ENCODE measurements at regions of chr11 and their contacts with region 1.

Region 1: DNA sequence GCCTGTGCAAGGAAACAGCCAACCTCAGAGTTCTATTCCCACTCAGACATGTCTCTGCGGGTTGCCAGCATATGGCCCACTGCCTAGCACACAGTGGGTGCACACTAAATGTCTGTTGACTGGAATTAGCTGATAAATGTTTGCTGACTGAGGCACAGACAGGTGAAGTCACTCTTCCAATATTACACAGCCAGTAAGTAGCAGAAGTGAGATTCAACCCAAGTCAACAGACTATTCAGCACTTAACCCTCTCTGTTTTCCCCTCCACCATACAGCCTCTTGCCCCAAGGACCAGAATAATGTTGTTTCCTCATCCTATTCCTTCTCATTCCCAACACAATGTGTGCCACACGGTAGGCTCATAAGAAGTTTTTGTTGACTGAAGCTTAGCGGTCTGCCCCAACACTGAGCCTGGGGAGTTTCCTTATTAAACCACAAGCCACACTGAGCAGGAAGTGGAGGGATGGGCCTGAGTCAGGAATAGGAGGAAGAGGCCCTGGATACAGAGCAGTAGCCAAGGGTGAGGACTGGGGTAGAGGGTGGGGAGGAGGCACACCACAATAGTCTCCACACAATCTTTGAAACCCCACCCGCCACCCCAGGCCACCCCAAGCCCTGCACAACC is 15.7 kb upstream of the IL10RA start:
- DNase-seq: no peak
- ATAC-seq: peak; percentile 36
- H3K4me3 ChIP-seq: no peak overlapping the region
- H3K4me3 Mint-ChIP-seq: peak overlapping the region; percentile 36
- H3K27ac ChIP-seq: no peak overlapping the region
- H3K27ac Mint-ChIP-seq: no peak overlapping the region
- H3K4me1 ChIP-seq: peaks cover 14 to 25% of the 10 kb centered on the region in 2 donors
- H3K4me1 Mint-ChIP-seq: peaks cover 36% of the 10 kb centered on the region
- H3K27me3 ChIP-seq: no peaks in the 10 kb centered on the region
- H3K27me3 Mint-ChIP-seq: no peaks in the 10 kb centered on the region
- CTCF ChIP-seq: no peak

Region 2: GRCh38 chr11:117907251-117907981 is 63.1 kb before region 1 on chr11:
- CTCF ChIA-PET with region 1: no interaction called
- POLR2A ChIA-PET with region 1: interaction called, 10 read pairs
- intact Hi-C with region 1: no loop called
- DNase-seq: peak; percentile 47
- ATAC-seq: peak; percentile 93
- H3K4me3 ChIP-seq: no peak overlapping the region
- H3K4me3 Mint-ChIP-seq: no peak overlapping the region
- H3K27ac ChIP-seq: no peak overlapping the region
- H3K27ac Mint-ChIP-seq: no peak overlapping the region
- H3K4me1 ChIP-seq: no peaks in the 10 kb centered on the region
- H3K4me1 Mint-ChIP-seq: peaks cover 5% of the 10 kb centered on the region
- H3K27me3 ChIP-seq: peaks cover 0 to 5% (median 0%) of the 10 kb centered on the region in 4 experiments
- H3K27me3 Mint-ChIP-seq: peaks cover 12% of the 10 kb centered on the region
- CTCF ChIP-seq: no peak

Region 3: GRCh38 chr11:117934526-117935307 is 35.8 kb before region 1 on chr11:
- CTCF ChIA-PET with region 1: no interaction called
- POLR2A ChIA-PET with region 1: no interaction called
- intact Hi-C with region 1: no loop called
- DNase-seq: no peak
- ATAC-seq: no peak
- H3K4me3 ChIP-seq: no peak overlapping the region
- H3K4me3 Mint-ChIP-seq: no peak overlapping the region
- H3K27ac ChIP-seq: no peak overlapping the region
- H3K27ac Mint-ChIP-seq: no peak overlapping the region
- H3K4me1 ChIP-seq: peaks cover 11 to 20% of the 10 kb centered on the region in 2 donors
- H3K4me1 Mint-ChIP-seq: peaks cover 16% of the 10 kb centered on the region
- H3K27me3 ChIP-seq: no peaks in the 10 kb centered on the region
- H3K27me3 Mint-ChIP-seq: no peaks in the 10 kb centered on the region
- CTCF ChIP-seq: no peak

Region 4: DNA sequence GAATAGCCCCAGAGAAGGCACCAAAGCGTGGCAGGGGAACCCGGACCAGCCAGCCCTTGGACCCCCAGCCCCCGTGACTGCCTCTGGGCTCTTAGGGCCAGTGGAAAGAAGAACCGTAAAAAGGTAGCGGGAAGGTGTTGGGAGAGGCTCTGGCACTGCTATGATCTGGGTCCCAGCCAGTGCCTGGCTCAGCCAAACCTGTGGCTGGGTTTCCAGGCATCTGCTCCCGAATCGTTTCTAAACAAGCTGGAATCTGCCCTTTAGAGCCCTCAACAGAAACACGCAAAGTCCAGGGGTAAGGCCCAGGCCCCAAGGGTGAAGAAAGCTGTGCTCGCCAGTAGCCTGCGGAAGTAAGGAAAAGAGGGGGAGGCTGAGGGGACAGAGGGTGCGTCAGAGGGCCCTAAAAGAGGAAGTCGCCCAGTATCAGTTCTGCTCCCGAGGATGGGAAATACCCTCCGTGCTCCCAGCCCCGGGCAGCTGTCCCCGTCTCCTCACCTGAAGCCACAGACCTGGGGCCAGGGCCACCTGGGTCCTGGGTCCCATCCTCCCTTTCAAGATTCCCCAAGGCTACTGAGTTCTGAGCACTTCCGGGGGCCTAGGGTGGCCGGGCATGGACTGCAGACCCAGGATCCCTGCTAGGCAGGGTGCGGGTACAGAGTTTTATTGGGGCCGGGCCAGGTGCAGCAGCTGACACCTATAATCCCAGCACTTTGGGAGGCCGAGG is 40.4 kb after region 1 on chr11:
- CTCF ChIA-PET with region 1: no interaction called
- POLR2A ChIA-PET with region 1: interaction called, 7 read pairs
- intact Hi-C with region 1: loop called (anchors 5 kb)
- DNase-seq: peak; percentile 96
- ATAC-seq: peak; percentile 73
- H3K4me3 ChIP-seq: peak overlapping the region in 2 of 5 experiments; percentile 2 to 38
- H3K4me3 Mint-ChIP-seq: peak overlapping the region; percentile 75
- H3K27ac ChIP-seq: peak overlapping the region; percentile 95 to 99
- H3K27ac Mint-ChIP-seq: peak overlapping the region; percentile 99
- H3K4me1 ChIP-seq: peaks cover 99 to 100% of the 10 kb centered on the region in 2 donors
- H3K4me1 Mint-ChIP-seq: peaks cover 100% of the 10 kb centered on the region
- H3K27me3 ChIP-seq: no peaks in the 10 kb centered on the region
- H3K27me3 Mint-ChIP-seq: no peaks in the 10 kb centered on the region
- CTCF ChIP-seq: no peak

Measured in B cell (primary cell).